MCF 10A (cell line): ENCODE measurements at regions of chr3 and their contacts with region 1.

Region 1: GRCh38 chr3:55169608-55170010 is 241.8 kb upstream of the LRTM1 start:
- DNase-seq: peak; percentile 92
- H3K4me3 Mint-ChIP-seq: peak overlapping the region; percentile 42
- H3K27ac Mint-ChIP-seq: peak overlapping the region; percentile 99
- H3K4me1 Mint-ChIP-seq: peaks cover 47% of the 10 kb centered on the region
- H3K27me3 Mint-ChIP-seq: no peaks in the 10 kb centered on the region
- CTCF ChIP-seq: no peak

Region 2: DNA sequence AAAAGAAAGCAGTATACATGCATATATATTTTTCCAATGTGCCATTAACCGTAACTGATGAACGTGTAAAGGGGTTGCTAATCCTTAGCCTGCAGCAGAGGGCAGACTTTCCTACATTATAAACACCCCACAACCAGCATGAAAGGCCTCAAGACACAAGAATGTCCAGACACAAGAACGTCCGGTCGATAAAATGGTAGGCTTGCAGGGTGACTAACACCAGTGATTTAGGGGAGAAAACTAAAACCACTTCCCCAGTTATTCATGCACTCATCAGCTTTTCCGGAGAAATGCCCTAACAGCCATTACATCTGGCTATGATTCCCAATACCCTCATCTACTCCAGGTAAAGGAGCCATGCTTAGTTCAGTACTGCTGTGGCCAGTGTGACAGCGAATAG is 299.2 kb before region 1 on chr3:
- CTCF ChIA-PET with region 1: interaction called, 4 read pairs
- POLR2A ChIA-PET with region 1: no interaction called
- intact Hi-C with region 1: loop called (anchors 1 kb)
- DNase-seq: peak; percentile 77
- H3K4me3 Mint-ChIP-seq: no peak overlapping the region
- H3K27ac Mint-ChIP-seq: no peak overlapping the region
- H3K4me1 Mint-ChIP-seq: peaks cover 41% of the 10 kb centered on the region
- H3K27me3 Mint-ChIP-seq: no peaks in the 10 kb centered on the region
- CTCF ChIP-seq: peak; percentile 69

Region 3: GRCh38 chr3:54951405-54951804 is 218.2 kb before region 1 on chr3:
- CTCF ChIA-PET with region 1: interaction called, 5 read pairs
- POLR2A ChIA-PET with region 1: no interaction called
- intact Hi-C with region 1: loop called (anchors 5 kb)
- DNase-seq: peak; percentile 78
- H3K4me3 Mint-ChIP-seq: no peak overlapping the region
- H3K27ac Mint-ChIP-seq: no peak overlapping the region
- H3K4me1 Mint-ChIP-seq: peaks cover 20% of the 10 kb centered on the region
- H3K27me3 Mint-ChIP-seq: no peaks in the 10 kb centered on the region
- CTCF ChIP-seq: peak; percentile 50

Region 4: GRCh38 chr3:55180936-55181535 is 11.4 kb after region 1 on chr3:
- CTCF ChIA-PET with region 1: interaction called, 20 read pairs
- POLR2A ChIA-PET with region 1: interaction called, 3 read pairs
- intact Hi-C with region 1: no loop called
- DNase-seq: peak; percentile 63
- H3K4me3 Mint-ChIP-seq: no peak overlapping the region
- H3K27ac Mint-ChIP-seq: no peak overlapping the region
- H3K4me1 Mint-ChIP-seq: peaks cover 11% of the 10 kb centered on the region
- H3K27me3 Mint-ChIP-seq: no peaks in the 10 kb centered on the region
- CTCF ChIP-seq: peak; percentile 56

Region 5: DNA sequence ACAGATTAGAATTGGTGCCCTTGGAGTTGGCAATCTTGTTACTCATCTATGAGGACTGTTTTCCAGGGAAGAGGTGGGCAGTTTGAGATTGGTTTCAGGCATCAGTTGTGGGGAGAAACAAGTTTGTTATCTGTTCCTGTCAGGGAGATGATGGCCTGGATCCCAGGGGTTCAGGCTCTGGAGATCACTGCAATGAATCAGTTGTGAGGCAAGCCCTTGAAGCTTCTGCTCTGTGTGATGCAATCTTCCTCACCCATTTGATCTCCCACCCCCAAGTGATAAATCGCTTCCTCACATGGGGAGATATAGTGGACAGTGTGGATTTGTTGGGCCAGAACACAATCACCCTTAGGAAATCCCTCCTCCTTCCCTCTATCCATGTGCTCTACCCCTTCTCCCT is 34.8 kb after region 1 on chr3:
- CTCF ChIA-PET with region 1: no interaction called
- POLR2A ChIA-PET with region 1: no interaction called
- intact Hi-C with region 1: no loop called
- DNase-seq: no peak
- H3K4me3 Mint-ChIP-seq: no peak overlapping the region
- H3K27ac Mint-ChIP-seq: peak overlapping the region; percentile 42
- H3K4me1 Mint-ChIP-seq: peaks cover 14% of the 10 kb centered on the region
- H3K27me3 Mint-ChIP-seq: no peaks in the 10 kb centered on the region
- CTCF ChIP-seq: no peak

Region 6: GRCh38 chr3:55349851-55350450 is 180.3 kb after region 1 on chr3:
- CTCF ChIA-PET with region 1: no interaction called
- POLR2A ChIA-PET with region 1: no interaction called
- intact Hi-C with region 1: no loop called
- DNase-seq: no peak
- H3K4me3 Mint-ChIP-seq: no peak overlapping the region
- H3K27ac Mint-ChIP-seq: no peak overlapping the region
- H3K4me1 Mint-ChIP-seq: no peaks in the 10 kb centered on the region
- H3K27me3 Mint-ChIP-seq: no peaks in the 10 kb centered on the region
- CTCF ChIP-seq: no peak